PC-9 (cell line): ENCODE measurements at regions of chr18 and their contacts with region 1.

Region 1: DNA sequence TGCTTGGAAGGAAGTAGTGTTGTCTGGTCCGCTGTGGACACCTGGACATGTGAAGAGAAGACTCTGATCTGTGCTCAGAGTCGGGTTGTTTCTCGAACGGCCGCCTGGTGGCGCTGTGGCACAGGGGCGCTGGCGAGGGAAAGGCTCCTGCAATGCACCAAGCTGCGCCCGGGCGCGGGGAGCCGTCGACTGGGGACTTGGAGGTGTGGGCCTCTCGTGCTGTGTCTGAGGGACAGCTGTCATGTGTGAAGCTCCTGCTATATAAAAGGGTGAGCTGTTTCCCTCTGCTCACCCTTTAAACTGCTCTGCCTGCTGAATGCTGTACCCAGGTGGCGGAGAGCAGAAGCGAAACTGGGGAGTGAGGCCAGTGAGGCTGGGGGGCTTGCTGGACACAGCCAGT is 44.0 kb downstream of the GNAL start:
- DNase-seq: peak; percentile 51 to 80
- H3K4me3 ChIP-seq: peak overlapping the region; percentile 25; the same call in 1 of the 2 replicates
- H3K27ac ChIP-seq: no peak overlapping the region
- H3K4me1 ChIP-seq: no peaks in the 10 kb centered on the region
- H3K27me3 ChIP-seq: peaks cover 17% of the 10 kb centered on the region; the same call in 1 of the 2 replicates
- CTCF ChIP-seq: peak; percentile 92

Region 2: GRCh38 chr18:11518788-11519685 is 214.0 kb before region 1 on chr18:
- CTCF ChIA-PET with region 1: no interaction called
- POLR2A ChIA-PET with region 1: no interaction called
- intact Hi-C with region 1: no loop called
- DNase-seq: peak in 1 of 2 experiments; percentile 25
- H3K4me3 ChIP-seq: no peak overlapping the region
- H3K27ac ChIP-seq: no peak overlapping the region
- H3K4me1 ChIP-seq: no peaks in the 10 kb centered on the region
- H3K27me3 ChIP-seq: peaks cover 20% of the 10 kb centered on the region
- CTCF ChIP-seq: peak; percentile 68

Region 3: GRCh38 chr18:11570769-11571168 is 162.3 kb before region 1 on chr18:
- CTCF ChIA-PET with region 1: no interaction called
- POLR2A ChIA-PET with region 1: no interaction called
- intact Hi-C with region 1: no loop called
- DNase-seq: no peak
- H3K4me3 ChIP-seq: no peak overlapping the region
- H3K27ac ChIP-seq: no peak overlapping the region
- H3K4me1 ChIP-seq: no peaks in the 10 kb centered on the region
- H3K27me3 ChIP-seq: peaks cover 76% of the 10 kb centered on the region
- CTCF ChIP-seq: no peak; the same call in 1 of the 2 replicates

Region 4: DNA sequence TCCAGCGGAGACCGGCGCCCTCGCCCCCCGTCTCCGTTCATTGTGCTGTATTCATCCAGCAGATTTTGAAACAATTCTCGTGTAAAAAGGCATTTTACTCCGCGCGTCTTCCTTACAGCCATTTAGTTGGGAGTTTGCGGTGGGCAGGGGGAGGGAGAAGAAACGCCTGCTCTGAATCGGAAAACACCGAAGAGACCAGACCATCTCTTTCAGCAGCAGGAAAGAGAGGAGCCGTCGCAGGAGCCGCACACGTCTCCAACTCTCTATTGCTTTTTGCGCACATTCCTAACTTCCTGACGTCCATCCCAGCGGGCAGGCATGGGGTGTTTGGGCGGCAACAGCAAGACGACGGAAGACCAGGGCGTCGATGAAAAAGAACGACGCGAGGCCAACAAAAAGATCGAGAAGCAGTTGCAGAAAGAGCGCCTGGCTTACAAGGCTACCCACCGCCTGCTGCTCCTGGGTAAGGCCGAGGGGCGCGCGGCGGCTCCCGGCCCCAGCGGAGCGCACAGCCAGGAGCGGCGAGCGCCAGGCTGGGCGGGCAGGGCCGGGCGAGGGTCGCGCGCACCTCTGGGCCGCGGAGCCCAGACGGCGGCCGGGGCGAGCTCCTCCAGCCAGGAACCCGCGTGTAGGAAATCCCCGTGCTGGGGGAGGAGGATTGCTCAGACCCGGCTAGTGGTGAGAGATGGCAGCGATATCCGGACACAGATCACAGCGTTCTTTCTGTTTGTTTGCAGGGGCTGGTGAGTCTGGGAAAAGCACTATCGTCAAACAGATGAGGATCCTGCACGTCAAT is 19.3 kb after region 1 on chr18:
- CTCF ChIA-PET with region 1: interaction called, 11 read pairs
- POLR2A ChIA-PET with region 1: no interaction called
- intact Hi-C with region 1: no loop called
- DNase-seq: no peak
- H3K4me3 ChIP-seq: no peak overlapping the region
- H3K27ac ChIP-seq: no peak overlapping the region
- H3K4me1 ChIP-seq: no peaks in the 10 kb centered on the region
- H3K27me3 ChIP-seq: no peaks in the 10 kb centered on the region; the same call in 1 of the 2 replicates
- CTCF ChIP-seq: no peak

Region 5: DNA sequence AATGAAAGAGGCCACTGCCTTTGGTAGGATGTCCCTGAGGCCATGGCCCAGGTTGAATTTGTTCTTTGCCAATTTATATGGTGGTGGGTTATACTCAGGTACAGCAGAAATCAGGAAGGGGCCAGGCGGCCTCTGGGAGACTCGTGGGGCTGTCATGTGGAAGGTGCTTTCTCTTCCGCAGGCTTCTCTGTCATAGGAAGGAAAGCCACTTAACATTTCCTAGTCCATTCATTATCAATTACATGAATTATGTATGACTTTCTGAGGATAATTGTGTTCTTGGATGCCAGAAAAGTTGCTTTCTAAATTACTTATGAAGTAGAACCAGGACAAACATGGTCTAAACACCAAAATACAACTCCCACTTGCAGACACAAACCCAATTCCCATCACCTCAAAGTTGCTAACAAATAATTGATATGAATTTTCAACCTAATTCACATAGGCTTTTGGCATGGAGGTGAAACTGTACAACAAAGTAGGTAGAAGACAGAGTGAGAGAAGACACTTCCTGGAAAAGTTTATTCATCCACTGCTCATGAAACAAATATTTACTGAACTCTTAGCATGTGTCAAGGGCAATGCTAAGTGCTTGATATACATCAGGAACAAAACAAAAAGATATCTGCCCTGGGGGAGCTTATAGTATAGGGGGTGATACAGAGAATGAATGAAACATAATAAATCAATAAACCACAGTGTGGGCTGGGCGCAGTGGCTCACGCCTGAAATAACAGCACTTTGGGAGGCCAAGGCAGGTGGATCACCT is 67.7 kb after region 1 on chr18:
- CTCF ChIA-PET with region 1: interaction called, 13 read pairs
- POLR2A ChIA-PET with region 1: no interaction called
- intact Hi-C with region 1: no loop called
- DNase-seq: peak in 1 of 2 experiments; percentile 80
- H3K4me3 ChIP-seq: no peak overlapping the region
- H3K27ac ChIP-seq: 0 out of 2 replicates have a peak overlapping the region, but pooled peaks have one; percentile 31
- H3K4me1 ChIP-seq: peaks cover 12% of the 10 kb centered on the region
- H3K27me3 ChIP-seq: no peaks in the 10 kb centered on the region
- CTCF ChIP-seq: no peak

Region 6: GRCh38 chr18:11937874-11938478 is 204.9 kb after region 1 on chr18:
- CTCF ChIA-PET with region 1: interaction called, 11 read pairs
- POLR2A ChIA-PET with region 1: interaction called, 5 read pairs
- intact Hi-C with region 1: loop called (anchors 1 kb)
- DNase-seq: peak; percentile 61 to 70
- H3K4me3 ChIP-seq: no peak overlapping the region
- H3K27ac ChIP-seq: no peak overlapping the region
- H3K4me1 ChIP-seq: no peaks in the 10 kb centered on the region
- H3K27me3 ChIP-seq: no peaks in the 10 kb centered on the region
- CTCF ChIP-seq: peak; percentile 85

Region 7: DNA sequence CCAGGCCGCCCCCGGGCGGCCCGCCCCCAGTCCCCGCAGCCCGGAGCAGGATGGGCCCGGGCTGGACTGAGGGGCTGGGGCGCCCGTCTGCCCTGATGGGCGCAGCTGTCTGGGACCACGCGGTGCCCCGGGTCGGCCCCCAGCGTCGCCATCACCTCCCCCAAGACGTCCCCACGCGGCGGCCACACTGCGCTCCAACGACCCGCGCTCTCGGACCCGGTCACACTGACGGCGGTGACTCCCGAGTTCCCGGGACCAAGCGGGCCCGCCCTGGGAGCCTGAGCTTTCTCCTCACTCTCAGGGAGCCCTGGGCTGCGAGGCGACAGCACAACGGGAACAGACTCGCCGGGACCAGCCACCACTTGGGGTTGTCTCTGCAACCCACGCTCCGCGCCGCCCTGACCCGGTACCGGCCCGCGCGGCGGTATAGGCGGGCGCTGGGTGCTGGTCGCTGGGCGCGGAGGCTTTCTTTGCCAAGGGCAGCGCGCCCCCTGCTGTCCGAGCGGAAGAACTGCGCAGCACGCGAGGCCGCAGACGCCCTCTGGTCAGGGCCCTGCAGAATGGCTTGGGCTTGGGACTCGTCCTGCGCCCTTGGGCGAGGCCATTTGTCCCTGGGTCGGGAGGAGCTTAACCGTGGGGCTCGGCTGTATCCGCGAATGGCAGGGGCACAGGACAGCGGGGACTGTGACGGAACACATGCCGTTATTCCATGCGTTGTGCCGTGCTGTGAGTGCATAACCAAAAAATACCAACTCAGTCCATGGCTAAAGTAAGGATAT is 305.8 kb after region 1 on chr18:
- CTCF ChIA-PET with region 1: interaction called, 3 read pairs
- POLR2A ChIA-PET with region 1: no interaction called
- intact Hi-C with region 1: loop called (anchors 1 kb)
- DNase-seq: peak; percentile 57 to 84
- H3K4me3 ChIP-seq: peak overlapping the region; percentile 60
- H3K27ac ChIP-seq: no peak overlapping the region
- H3K4me1 ChIP-seq: 0 out of 2 replicates have a peak, but pooled peaks cover 3% of the 10 kb centered on the region
- H3K27me3 ChIP-seq: no peaks in the 10 kb centered on the region
- CTCF ChIP-seq: peak; percentile 97